ENCODE measurements at regions of chr3 and their contacts with region 1.

Region 1: DNA sequence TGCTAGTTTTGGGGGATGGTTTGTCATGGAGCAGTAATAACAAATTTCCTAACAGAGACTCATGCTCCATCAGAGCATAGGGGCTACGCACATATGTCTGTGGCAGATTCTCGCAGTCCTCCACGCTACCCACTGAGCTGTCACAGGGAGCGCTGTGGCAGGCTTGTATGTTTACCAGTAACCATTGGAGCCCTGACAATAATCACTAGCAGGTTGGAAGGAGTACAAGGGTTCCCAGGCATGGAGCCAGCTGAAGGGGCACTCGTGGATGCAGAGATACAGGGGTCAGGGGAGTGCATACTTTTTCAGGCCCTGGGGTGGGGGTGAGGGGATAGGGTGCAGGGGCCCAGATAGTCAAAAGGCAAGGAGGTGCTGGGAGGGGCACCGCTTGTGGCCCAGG is 7.9 kb upstream of the GP9 start:
- DNase-seq: peak in 1 of 2 donors; percentile 76
- H3K4me3 ChIP-seq: no peak overlapping the region
- H3K27ac ChIP-seq: peak overlapping the region; percentile 37 to 60
- H3K4me1 ChIP-seq: peaks cover 0 to 29% (median 24%) of the 10 kb centered on the region in 4 donors
- H3K27me3 ChIP-seq: no peaks in the 10 kb centered on the region
- CTCF ChIP-seq: no peak

Region 2: GRCh38 chr3:129240436-129240835 is 187.8 kb after region 1 on chr3:
- intact Hi-C with region 1: loop called (anchors 5 kb)
- DNase-seq: no peak
- H3K4me3 ChIP-seq: no peak overlapping the region
- H3K27ac ChIP-seq: no peak overlapping the region
- H3K4me1 ChIP-seq: peaks cover 0 to 6% (median 4%) of the 10 kb centered on the region in 4 donors
- H3K27me3 ChIP-seq: no peaks in the 10 kb centered on the region
- CTCF ChIP-seq: no peak

Measured in tibial artery (tissue), 4 donors.